PC-9 (cell line): ENCODE measurements at regions of chr3 and their contacts with region 1.

Region 1: DNA sequence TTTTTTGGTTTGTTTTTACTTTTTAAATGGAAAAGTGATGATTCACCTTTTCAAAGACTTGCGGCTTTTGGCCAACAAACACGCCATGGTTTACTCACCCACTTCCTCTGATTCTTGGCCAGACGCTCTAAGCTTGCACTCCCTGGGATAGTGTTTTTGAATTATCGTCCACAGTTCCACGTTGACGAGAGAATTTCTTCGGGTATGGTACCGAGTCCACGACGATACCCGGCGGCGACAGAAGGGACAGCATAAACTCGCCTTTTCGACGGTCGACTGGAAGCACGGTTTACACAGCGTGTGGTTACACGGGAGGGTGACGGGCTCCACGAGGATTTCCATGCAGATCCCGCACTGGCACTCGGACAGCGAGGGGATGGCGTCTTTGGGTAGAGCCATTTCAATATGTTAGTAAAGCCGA is 783 bp downstream of the RNF168 start:
- DNase-seq: peak; percentile 41 to 63
- H3K4me3 ChIP-seq: peak overlapping the region; percentile 80
- H3K27ac ChIP-seq: peak overlapping the region; percentile 89
- H3K4me1 ChIP-seq: peaks cover 32% of the 10 kb centered on the region
- H3K27me3 ChIP-seq: no peaks in the 10 kb centered on the region
- CTCF ChIP-seq: no peak

Region 2: GRCh38 chr3:196251918-196252317 is 250.9 kb before region 1 on chr3:
- CTCF ChIA-PET with region 1: interaction called, 12 read pairs
- POLR2A ChIA-PET with region 1: no interaction called
- intact Hi-C with region 1: no loop called
- DNase-seq: no peak
- H3K4me3 ChIP-seq: no peak overlapping the region
- H3K27ac ChIP-seq: no peak overlapping the region
- H3K4me1 ChIP-seq: no peaks in the 10 kb centered on the region
- H3K27me3 ChIP-seq: no peaks in the 10 kb centered on the region
- CTCF ChIP-seq: no peak

Region 3: GRCh38 chr3:196399485-196399945 is 103.3 kb before region 1 on chr3:
- CTCF ChIA-PET with region 1: no interaction called
- POLR2A ChIA-PET with region 1: no interaction called
- intact Hi-C with region 1: loop called (anchors 2 kb)
- DNase-seq: peak; percentile 64 to 85
- H3K4me3 ChIP-seq: no peak overlapping the region
- H3K27ac ChIP-seq: peak overlapping the region; percentile 28; the same call in 1 of the 2 replicates
- H3K4me1 ChIP-seq: peaks cover 24% of the 10 kb centered on the region
- H3K27me3 ChIP-seq: no peaks in the 10 kb centered on the region
- CTCF ChIP-seq: no peak

Region 4: GRCh38 chr3:196486263-196486662 is 16.5 kb before region 1 on chr3:
- CTCF ChIA-PET with region 1: no interaction called
- POLR2A ChIA-PET with region 1: no interaction called
- intact Hi-C with region 1: no loop called
- DNase-seq: no peak
- H3K4me3 ChIP-seq: no peak overlapping the region
- H3K27ac ChIP-seq: no peak overlapping the region
- H3K4me1 ChIP-seq: 0 out of 2 replicates have a peak, but pooled peaks cover 6% of the 10 kb centered on the region
- H3K27me3 ChIP-seq: no peaks in the 10 kb centered on the region
- CTCF ChIP-seq: peak; percentile 57; the same call in 1 of the 2 replicates

Region 5: GRCh38 chr3:196517919-196518318 is 15.1 kb after region 1 on chr3:
- CTCF ChIA-PET with region 1: no interaction called
- POLR2A ChIA-PET with region 1: no interaction called
- intact Hi-C with region 1: no loop called
- DNase-seq: peak; percentile 50 to 61
- H3K4me3 ChIP-seq: no peak overlapping the region
- H3K27ac ChIP-seq: no peak overlapping the region
- H3K4me1 ChIP-seq: peaks cover 8% of the 10 kb centered on the region
- H3K27me3 ChIP-seq: no peaks in the 10 kb centered on the region
- CTCF ChIP-seq: no peak

Region 6: DNA sequence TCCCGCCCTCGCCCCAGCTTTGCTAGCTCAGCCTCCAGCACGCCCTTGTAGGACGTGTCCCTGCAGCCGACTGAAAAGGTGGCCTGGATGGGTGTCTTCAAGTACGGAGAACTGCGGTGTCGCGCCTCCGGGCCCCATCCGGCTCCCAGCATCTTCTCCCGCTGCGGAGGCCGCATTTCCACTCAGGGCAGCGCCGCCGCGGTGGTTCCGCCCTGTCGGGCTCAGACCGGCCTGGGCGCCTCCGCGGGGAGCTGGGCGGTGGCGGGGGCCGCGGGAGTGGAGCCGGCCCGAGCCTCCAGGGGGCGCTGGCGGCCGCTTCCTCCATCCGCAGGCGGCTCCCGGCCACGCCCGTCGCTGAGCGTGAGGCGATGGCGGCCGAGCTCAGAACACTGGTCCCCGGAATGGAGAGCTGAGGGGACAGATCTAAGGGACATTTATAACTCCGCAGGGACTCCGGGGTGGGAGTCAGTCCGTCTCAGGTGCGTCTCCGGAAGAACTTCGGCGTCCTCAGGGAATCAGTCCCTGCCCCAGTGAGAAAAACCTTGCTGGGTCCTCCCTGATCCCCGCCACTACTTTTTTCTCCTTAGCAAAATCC is 26.0 kb after region 1 on chr3:
- CTCF ChIA-PET with region 1: interaction called, 3 read pairs
- POLR2A ChIA-PET with region 1: no interaction called
- intact Hi-C with region 1: loop called (anchors 1 kb)
- DNase-seq: peak; percentile 59 to 93
- H3K4me3 ChIP-seq: peak overlapping the region; percentile 66
- H3K27ac ChIP-seq: no peak overlapping the region
- H3K4me1 ChIP-seq: no peaks in the 10 kb centered on the region
- H3K27me3 ChIP-seq: no peaks in the 10 kb centered on the region
- CTCF ChIP-seq: peak; percentile 89